Dorsolateral prefrontal cortex (tissue), 120 donors: ENCODE measurements at regions of chr10 and their contacts with region 1.

Region 1: DNA sequence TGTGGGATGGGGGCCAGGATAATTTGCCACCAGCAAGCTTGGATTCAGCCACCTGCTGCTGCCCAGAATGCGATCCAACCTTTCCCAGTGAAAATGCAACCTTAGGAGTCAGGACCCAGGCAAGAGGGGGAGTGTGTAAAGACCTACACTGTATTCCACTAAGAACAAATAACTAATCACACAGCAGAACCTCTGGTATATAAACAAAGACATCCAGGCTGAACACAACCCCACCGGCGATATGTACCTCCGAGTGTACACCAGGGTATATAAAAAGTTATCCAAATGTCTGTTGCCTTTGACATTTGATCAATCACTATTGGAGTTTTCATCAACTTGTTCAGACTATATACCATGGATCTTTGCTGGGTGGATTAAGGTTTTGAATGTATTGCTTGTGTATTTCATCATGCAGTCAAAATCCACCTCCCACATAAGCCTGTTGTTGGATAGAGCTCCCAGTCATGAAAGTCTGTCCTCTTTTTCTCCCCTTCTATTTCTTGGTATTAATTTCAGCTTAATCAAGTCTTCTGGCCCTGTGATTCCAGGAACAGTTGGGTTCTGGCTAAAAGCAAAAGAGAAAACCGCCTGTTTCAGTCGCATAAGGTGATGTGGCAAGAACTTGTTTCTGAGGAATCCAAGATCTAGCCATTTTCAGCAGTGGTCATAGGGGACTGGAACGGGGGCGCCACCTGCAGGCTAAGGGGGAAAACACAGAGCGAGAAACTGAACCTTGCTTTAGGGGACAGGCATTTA is 290.7 kb downstream of the CCDC3 start:
- DNase-seq: peak in 9 of 10 donors; percentile 54 to 84 (median 79)
- H3K4me3 ChIP-seq: no peak overlapping the region
- H3K27ac ChIP-seq: peak overlapping the region in 20 of 59 donors; percentile 7 to 83 (median 42)
- H3K27me3 ChIP-seq: no peaks in the 10 kb centered on the region
- CTCF ChIP-seq: peak; percentile 72 to 95 (median 88)

Region 2: DNA sequence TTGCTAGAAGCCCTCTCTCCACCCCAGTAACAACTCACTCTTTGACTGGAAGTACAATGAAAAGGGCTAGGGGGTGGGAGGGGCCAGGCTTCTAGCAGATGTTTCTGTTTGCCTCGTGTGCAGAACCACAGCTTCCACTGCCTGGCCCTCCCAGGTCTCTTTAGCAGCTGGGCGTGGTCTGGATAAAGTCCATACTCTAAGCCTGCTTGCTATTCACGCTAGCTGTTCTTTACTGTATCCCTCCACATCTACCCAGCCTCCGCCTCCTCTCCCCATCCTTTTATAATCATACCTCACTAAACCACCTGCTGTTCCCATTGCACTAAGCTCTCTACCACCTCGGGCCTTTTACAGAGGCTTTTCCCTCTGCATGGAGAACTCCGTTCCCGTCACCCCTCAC is 72.7 kb before region 1 on chr10:
- intact Hi-C with region 1: loop called in 1 of 2 experiments (anchors 5 kb)
- DNase-seq: peak in 2 of 10 donors; percentile 46 to 59
- H3K4me3 ChIP-seq: peak overlapping the region in 1 of 59 donors; percentile 8
- H3K27ac ChIP-seq: peak overlapping the region in 54 of 59 donors; percentile 10 to 89 (median 70)
- H3K27me3 ChIP-seq: no peaks in the 10 kb centered on the region
- CTCF ChIP-seq: no peak

Region 3: DNA sequence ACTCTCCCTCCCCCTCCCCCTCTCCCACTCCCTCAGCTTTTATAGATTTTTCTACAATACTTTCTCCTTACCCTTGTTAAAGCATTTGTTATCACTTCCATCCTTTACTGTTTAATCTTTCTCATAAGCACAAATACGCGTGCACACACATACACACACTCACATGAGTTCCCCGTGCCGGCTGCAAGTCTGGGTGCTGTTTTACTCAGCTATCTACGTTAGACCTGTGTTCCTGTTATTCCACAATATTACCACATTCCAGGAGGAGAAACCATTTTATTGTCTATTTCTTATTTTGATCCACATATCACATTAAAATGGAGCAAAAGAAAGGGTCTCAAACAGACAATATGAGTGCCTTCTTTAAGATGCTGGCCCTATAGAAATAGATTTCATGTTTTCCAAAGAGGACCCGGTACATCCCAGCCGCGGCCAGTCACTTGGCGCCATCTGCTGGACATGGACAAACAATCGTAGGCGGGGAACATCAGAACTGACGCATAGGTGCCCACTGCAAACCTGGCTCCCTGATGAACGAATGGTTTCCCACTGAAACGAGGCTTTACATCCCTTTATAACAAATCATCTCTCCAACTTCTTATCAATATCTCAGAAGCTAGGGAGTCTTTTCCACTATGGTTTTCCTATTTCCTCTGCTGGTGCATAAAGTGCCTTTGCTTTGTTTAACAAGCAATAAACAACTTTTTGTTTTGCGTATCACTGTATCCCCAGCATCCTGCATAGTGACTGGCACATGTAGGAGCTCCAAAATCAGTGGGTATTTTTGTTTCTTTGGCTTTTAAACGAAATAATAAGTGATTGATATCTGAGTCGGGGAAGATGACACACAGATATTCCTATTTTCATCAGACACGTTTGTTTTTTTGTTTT is 364.0 kb after region 1 on chr10:
- intact Hi-C with region 1: loop called (anchors 5 to 10 kb)
- DNase-seq: peak; percentile 61 to 86 (median 80)
- H3K4me3 ChIP-seq: peak overlapping the region in 32 of 59 donors; percentile 1 to 51 (median 27)
- H3K27ac ChIP-seq: peak overlapping the region in 1 of 59 donors; percentile 47
- H3K27me3 ChIP-seq: no peaks in the 10 kb centered on the region
- CTCF ChIP-seq: peak; percentile 70 to 95 (median 87)

Region 4: GRCh38 chr10:13183625-13184024 is 472.9 kb after region 1 on chr10:
- intact Hi-C with region 1: no loop called
- DNase-seq: no peak
- H3K4me3 ChIP-seq: no peak overlapping the region
- H3K27ac ChIP-seq: no peak overlapping the region
- H3K27me3 ChIP-seq: peaks cover 0 to 3% (median 0%) of the 10 kb centered on the region in 45 donors
- CTCF ChIP-seq: no peak